Activated CD8-positive, alpha-beta T cell treated with anti-CD3 and anti-CD28 coated beads, Interleukin-2, amount 10 ng/mL, durations not matched to agents 7 days and 5 days (primary cell): ENCODE measurements at regions of chr11 and their contacts with region 1.

Region 1: DNA sequence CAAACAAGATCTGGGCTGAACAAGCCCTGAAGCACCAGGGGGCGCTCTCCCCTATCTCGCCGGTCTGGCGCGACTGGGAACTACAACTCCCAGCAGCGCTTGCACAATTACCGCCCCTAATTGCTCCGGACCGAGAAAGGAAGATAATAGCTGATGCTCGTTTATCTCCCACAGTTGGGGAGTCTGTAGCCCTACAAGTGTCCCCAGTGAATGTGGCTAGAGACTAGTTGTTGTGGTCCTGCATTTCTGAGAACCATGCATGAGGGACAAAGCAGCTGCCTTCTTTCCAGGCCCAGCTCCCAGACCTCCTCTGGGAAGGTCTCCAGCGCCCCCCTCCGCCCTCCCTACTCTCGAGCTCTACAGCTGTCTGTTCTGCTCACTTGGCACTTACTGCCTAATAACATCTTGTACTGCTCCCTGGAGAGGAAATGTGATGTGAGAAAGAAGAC is 34.4 kb downstream of the NRXN2 start:
- DNase-seq: peak; percentile 94
- ATAC-seq: peak; percentile 99
- H3K4me3 Mint-ChIP-seq: peak overlapping the region; percentile 38
- H3K27ac Mint-ChIP-seq: no peak overlapping the region
- H3K4me1 Mint-ChIP-seq: peaks cover 19% of the 10 kb centered on the region
- H3K27me3 Mint-ChIP-seq: peaks cover 29% of the 10 kb centered on the region

Region 2: DNA sequence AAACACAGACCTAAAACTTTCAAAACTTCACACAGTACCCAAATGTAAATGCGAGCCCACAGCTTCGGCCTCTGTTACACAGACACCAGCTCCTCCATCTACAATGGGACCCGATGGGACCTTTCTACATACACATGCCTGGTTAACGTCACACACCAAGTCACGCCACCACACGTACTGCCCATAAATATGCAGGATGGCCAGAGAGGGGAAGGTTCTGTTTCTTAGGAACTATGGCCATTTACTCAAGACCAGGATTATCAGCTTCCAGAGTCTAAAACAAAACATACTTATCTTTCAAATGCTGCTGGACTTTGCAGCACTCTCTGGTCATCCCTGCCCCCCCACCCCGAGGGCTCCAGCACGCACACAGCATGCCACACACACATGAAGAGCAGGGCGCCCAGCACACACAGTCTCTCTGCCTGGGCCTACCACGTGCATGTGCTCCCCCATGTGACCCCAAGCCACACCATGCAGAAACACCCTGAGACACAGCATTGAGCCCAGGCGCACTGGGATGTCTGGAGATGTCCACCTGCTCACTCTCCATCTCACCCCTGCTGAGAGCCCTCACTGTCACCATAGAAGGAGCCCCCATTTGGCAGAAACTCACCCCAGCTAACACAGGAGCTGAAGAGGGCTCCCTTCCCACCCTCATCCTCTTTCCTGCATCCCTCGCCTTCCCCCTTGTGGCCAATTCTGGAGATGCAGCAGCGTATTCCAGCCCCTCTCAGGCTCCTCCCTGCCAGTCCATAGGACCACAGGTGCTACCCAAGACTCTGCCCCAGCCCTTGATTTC is 35.8 kb before region 1 on chr11:
- CTCF ChIA-PET with region 1: interaction called, 10 read pairs
- POLR2A ChIA-PET with region 1: no interaction called
- DNase-seq: peak; percentile 83
- ATAC-seq: peak; percentile 79
- H3K4me3 Mint-ChIP-seq: no peak overlapping the region
- H3K27ac Mint-ChIP-seq: no peak overlapping the region
- H3K4me1 Mint-ChIP-seq: no peaks in the 10 kb centered on the region
- H3K27me3 Mint-ChIP-seq: no peaks in the 10 kb centered on the region

Region 3: DNA sequence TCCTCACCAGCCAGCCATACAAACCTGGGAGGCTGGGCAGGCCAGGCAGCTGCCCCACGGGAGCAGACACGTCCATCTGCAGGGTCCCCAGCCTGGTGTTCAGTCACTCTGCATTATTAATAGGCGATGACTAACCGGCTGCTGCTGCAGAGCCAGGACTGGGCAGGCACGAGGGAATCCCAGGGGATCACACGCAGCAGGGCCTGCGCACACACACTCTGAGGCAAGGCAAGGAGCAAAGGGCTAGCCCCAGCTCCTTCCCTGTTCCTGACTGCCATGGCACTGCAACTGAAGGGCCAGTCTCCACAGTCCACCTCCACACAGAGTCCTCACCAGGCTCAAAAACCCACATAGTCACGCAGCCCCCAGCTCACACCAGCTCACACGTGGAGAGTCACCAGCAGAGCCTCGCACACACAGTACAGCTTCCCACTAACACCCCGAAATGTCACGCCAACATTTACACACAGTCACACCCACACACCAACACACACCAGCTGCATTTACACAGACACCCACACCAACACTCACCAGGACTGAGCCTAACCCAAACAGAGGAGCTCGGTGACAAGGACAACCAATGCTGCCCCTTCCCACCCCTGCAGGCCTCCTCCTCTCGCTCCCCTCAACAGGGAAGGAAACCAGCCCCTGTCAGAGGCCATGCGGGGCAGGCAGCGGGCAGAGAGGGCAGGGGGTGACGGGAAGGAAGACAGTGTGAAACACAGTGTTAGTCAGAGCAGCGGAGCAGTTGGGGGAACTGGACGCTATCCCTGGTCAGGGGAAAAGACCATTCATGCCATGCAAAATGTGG is 12.9 kb before region 1 on chr11:
- CTCF ChIA-PET with region 1: interaction called, 25 read pairs
- POLR2A ChIA-PET with region 1: no interaction called
- DNase-seq: no peak
- ATAC-seq: no peak
- H3K4me3 Mint-ChIP-seq: no peak overlapping the region
- H3K27ac Mint-ChIP-seq: no peak overlapping the region
- H3K4me1 Mint-ChIP-seq: no peaks in the 10 kb centered on the region
- H3K27me3 Mint-ChIP-seq: peaks cover 45% of the 10 kb centered on the region

Region 4: DNA sequence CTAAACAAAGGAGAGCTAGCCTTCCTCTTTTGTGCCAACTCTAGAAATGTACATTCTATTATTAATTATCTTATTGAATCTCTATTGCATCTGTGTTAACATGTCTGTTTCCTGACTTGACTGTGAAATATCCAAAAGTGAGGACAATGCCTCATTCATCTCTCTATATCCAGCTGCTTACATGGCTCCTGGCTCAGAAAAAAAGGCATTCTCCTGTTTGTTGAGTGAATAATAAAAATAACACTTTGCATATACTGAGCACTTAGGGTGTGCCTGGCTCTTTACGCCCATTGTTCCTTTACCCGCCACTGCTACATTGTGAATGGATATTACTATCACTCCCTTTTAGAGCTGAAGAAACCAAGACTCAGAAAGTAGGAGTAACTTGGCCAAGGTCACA is 14.5 kb after region 1 on chr11:
- CTCF ChIA-PET with region 1: interaction called, 61 read pairs
- POLR2A ChIA-PET with region 1: interaction called, 4 read pairs
- DNase-seq: no peak
- ATAC-seq: no peak
- H3K4me3 Mint-ChIP-seq: no peak overlapping the region
- H3K27ac Mint-ChIP-seq: no peak overlapping the region
- H3K4me1 Mint-ChIP-seq: no peaks in the 10 kb centered on the region
- H3K27me3 Mint-ChIP-seq: peaks cover 37% of the 10 kb centered on the region

Region 5: GRCh38 chr11:64724863-64725532 is 36.4 kb after region 1 on chr11:
- CTCF ChIA-PET with region 1: interaction called, 12 read pairs
- POLR2A ChIA-PET with region 1: no interaction called
- DNase-seq: no peak
- ATAC-seq: no peak
- H3K4me3 Mint-ChIP-seq: no peak overlapping the region
- H3K27ac Mint-ChIP-seq: no peak overlapping the region
- H3K4me1 Mint-ChIP-seq: peaks cover 19% of the 10 kb centered on the region
- H3K27me3 Mint-ChIP-seq: peaks cover 22% of the 10 kb centered on the region

Region 6: GRCh38 chr11:64742889-64743590 is 54.5 kb after region 1 on chr11:
- CTCF ChIA-PET with region 1: interaction called, 28 read pairs
- POLR2A ChIA-PET with region 1: no interaction called
- DNase-seq: peak; percentile 78
- ATAC-seq: peak; percentile 24
- H3K4me3 Mint-ChIP-seq: peak overlapping the region; percentile 84
- H3K27ac Mint-ChIP-seq: no peak overlapping the region
- H3K4me1 Mint-ChIP-seq: peaks cover 42% of the 10 kb centered on the region
- H3K27me3 Mint-ChIP-seq: no peaks in the 10 kb centered on the region

Region 7: GRCh38 chr11:64900263-64900678 is 211.7 kb after region 1 on chr11:
- CTCF ChIA-PET with region 1: no interaction called
- POLR2A ChIA-PET with region 1: no interaction called
- DNase-seq: peak; percentile 55
- ATAC-seq: peak; percentile 80
- H3K4me3 Mint-ChIP-seq: no peak overlapping the region
- H3K27ac Mint-ChIP-seq: peak overlapping the region; percentile 67
- H3K4me1 Mint-ChIP-seq: peaks cover 5% of the 10 kb centered on the region
- H3K27me3 Mint-ChIP-seq: no peaks in the 10 kb centered on the region